BJ (cell line): ENCODE measurements at regions of chr2 and their contacts with region 1.

Region 1: GRCh38 chr2:120680136-120680761 is 55.4 kb upstream of the GLI2 start:
- DNase-seq: no peak
- H3K4me3 ChIP-seq: no peak overlapping the region
- H3K27me3 ChIP-seq: no peaks in the 10 kb centered on the region; the same call in 1 of the 2 replicates
- CTCF ChIP-seq: peak; percentile 66

Region 2: DNA sequence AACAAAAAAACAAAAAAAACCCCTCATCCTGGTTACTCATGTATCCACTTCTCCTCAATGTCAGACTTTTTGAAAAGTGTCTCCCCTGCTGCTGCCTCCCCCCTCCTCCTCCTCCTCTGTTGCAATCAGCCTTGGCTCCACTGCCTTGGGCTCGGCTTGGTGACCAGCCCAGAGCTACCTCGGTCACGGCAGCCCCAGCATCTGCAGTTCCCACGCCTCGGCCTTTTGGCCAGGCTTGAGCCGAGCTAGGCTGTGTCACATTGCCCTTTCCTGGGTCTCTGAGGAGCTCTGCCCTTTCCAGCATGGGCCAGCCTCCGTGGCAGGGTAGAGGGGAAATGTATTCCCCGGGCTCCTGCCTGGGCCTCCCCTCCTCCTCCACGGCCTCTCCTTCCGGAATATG is 357.0 kb before region 1 on chr2:
- CTCF ChIA-PET with region 1: interaction called, 13 read pairs
- POLR2A ChIA-PET with region 1: interaction called, 4 read pairs
- DNase-seq: no peak
- H3K4me3 ChIP-seq: no peak overlapping the region
- H3K27me3 ChIP-seq: peaks cover 15% of the 10 kb centered on the region
- CTCF ChIP-seq: no peak

Region 3: DNA sequence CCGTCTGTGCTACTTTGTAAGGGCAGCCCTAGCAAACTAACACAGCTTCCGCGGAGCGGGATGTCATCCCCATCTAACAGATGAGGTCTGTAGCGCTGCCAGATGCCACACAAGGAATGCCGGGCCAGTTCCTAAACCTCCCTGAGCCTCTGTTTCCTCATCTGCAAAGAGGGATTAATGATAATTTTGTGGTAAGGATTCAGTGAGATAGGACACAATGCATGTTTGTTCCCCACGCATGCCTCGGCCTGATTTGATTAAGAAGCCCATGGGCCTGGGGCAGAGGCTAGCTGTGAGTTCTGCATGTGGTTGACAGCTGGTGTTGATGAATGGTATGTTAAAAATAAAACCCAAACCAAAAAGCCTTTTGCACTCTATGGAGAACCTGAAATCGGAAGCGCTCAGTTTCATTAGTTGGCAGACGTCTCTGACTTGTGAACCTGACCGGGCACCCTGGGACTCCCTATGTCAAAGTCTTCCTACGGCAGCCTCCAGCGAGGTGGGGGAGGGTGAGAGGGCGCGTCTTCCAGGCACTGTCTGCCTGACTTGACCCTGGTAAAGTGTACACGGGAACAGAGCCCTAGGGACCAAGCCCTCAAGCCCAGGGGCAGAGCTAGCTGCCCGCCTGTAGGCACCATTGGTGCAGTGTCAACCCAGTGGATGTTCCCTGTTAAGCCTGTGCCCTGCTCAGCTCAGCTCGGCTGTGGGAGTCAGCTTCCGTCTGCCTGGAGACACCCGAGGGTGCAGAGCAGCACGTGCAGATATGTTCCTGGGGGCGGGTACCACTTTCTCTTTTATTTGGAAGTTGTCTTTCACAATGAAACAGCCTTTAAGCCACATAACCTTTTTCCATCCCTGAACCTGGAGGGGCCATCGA is 349.1 kb before region 1 on chr2:
- CTCF ChIA-PET with region 1: interaction called, 14 read pairs
- POLR2A ChIA-PET with region 1: interaction called, 4 read pairs
- DNase-seq: no peak
- H3K4me3 ChIP-seq: no peak overlapping the region
- H3K27me3 ChIP-seq: peaks cover 41% of the 10 kb centered on the region
- CTCF ChIP-seq: no peak

Region 4: DNA sequence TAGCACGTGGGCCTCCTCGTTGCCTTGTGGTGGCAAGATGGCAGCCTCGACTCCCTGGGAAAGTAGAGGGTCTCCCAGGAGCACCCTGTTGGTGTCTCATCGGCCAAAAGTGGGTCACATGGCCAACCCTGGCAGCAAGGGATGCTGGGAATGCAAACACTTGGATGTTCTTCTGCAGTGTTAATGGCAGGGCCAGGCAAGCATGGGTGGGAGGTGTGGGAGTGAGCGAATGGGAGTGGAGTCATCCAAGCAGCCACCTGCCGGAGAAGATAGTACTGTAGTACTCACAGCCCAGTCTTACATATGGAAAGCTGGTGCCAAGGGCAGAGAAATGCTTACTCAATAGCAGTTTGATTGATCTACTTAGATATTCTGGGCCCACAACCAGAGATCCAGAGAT is 212.1 kb before region 1 on chr2:
- CTCF ChIA-PET with region 1: no interaction called
- POLR2A ChIA-PET with region 1: no interaction called
- DNase-seq: no peak
- H3K4me3 ChIP-seq: no peak overlapping the region
- H3K27me3 ChIP-seq: no peaks in the 10 kb centered on the region
- CTCF ChIP-seq: no peak

Region 5: DNA sequence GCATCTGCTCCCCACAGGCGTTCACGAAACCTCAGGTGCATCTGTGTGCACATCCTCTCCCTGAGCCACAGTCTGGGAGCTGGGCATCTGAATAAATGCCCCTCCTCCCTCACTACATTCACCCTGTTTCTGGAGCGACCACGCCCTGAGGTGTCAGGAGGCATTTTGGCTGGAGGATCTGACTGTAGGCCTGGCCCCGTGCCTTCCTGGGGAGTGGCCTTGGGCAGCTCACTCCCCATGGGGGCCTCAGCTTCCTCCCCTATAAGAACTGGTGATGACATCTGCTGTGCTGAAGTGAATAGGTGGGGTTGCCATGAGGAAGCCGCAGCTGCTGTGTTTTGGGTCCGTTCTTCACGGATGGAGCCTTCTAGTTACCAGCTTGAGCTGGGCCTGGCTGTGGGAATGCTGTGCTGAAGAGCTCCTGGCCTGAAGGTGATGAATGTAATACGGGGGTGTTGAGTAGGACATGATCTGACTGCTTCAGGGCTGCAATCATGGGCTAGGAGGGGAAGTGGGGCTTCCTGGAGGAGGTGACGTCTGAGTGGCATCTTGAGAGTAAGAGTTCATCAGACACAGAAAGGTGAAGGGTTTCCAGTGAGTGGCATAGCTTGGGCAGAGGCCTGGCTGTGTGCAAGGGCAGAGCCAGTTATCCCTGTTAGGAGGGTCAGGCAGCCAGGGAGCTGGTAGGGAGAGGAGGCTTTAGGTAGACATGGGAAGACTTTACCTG is 113.6 kb after region 1 on chr2:
- CTCF ChIA-PET with region 1: no interaction called
- POLR2A ChIA-PET with region 1: interaction called, 10 read pairs
- DNase-seq: no peak
- H3K4me3 ChIP-seq: no peak overlapping the region
- H3K27me3 ChIP-seq: no peaks in the 10 kb centered on the region
- CTCF ChIP-seq: no peak

Region 6: GRCh38 chr2:121038891-121039616 is 358.8 kb after region 1 on chr2:
- CTCF ChIA-PET with region 1: no interaction called
- POLR2A ChIA-PET with region 1: no interaction called
- DNase-seq: no peak
- H3K4me3 ChIP-seq: no peak overlapping the region
- H3K27me3 ChIP-seq: peaks cover 25% of the 10 kb centered on the region
- CTCF ChIP-seq: no peak

Region 7: GRCh38 chr2:121076885-121077549 is 396.8 kb after region 1 on chr2:
- CTCF ChIA-PET with region 1: interaction called, 446 read pairs
- POLR2A ChIA-PET with region 1: no interaction called
- DNase-seq: no peak
- H3K4me3 ChIP-seq: no peak overlapping the region
- H3K27me3 ChIP-seq: peaks cover 3% of the 10 kb centered on the region; the same call in 1 of the 2 replicates
- CTCF ChIP-seq: peak; percentile 97